HepG2 (cell line): ENCODE measurements at regions of chr1 and their contacts with region 1.

Region 1: DNA sequence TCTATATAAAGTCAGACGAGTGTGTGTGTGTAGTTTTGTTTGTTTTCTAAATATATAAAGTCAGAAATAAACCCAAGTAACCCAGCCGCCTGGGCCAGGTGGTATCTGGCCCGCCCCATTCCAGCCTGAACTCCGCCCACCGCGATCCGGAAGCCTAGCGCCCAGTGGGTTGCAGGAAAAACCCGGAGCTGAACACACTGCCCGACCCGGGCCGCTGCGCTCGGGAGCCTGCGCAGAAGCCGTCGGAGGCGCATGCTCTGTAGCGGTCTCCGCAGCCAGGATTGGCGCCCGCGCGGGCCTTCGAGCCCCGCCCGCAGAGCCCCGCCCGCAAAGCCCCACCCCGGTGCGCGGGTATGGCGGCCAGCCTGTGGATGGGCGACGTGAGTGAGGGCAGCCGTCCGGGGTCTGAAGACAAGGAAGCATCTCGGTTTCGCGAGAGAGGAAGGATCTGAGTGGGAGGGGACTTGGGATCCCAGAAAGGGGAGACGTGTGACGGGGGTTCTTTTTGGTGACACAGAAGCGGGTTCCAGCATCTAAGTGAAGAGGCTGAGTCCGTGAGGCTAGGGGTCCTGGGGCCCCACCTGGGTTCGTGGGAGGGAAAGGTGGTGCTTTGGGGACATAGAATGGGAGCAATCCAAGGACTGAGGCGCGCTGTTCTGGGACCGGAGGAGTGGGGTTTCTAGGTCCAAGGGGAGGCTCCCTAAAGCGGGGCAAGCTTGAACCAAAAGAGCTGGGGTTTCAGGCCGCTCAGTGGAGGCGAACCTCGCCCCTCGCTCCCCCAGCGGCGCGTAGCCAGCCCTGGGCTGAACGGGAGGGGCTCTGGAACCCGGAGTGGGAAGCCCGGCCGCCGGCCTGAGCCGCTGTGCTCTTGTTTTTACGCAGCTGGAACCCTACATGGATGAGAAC is at the start of gene TRNAU1AP:
- DNase-seq: peak; percentile 90
- ATAC-seq: peak; percentile 94
- H3K4me3 ChIP-seq: peak within 1 kb of the TSS; percentile 67 to 92 (median 84)
- H3K27ac ChIP-seq: peak within 1 kb of the TSS; percentile 58
- H3K4me1 ChIP-seq: peaks cover 26% of the 10 kb centered on the region
- H3K27me3 ChIP-seq: no peaks in the 10 kb centered on the region; a peak in 1 of 5 replicates
- CTCF ChIP-seq: no peak; the same call in 1 of the 2 replicates
- EP300 ChIP-seq: peak in 1 of 2 experiments; percentile 56; a peak in 2 of 4 replicates
- POLR2A ChIP-seq: peak; percentile 48 to 81
- RAD21 ChIP-seq: peak; percentile 23; the same call in 1 of the 2 replicates
- total RNA-seq, gene TRNAU1AP: 28.3 and 29.0 TPM in 2 replicates

Region 2: DNA sequence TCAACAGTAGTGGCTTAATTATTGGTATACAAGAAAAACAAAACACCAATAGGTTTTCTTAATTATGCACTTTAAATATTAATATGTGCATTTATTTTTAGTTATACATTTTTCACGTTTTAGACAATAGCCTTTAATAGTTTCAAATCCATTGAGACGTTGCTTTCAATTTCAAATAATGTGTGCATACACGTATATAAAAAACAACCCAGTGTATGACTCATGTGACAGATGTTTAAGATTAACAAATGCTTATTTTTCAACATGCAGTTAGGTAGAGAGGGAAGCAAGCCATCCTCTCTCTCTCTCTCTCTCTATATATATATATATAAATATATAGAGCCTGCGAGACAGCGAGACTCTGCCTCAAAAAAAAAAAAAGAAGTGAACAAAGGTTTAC is 488.9 kb before region 1 on chr1:
- CTCF ChIA-PET with region 1: no interaction called
- POLR2A ChIA-PET with region 1: no interaction called
- in situ Hi-C with region 1: no loop called
- intact Hi-C with region 1: no loop called
- DNase-seq: no peak
- ATAC-seq: no peak
- H3K4me3 ChIP-seq: no peak overlapping the region
- H3K27ac ChIP-seq: no peak overlapping the region
- H3K4me1 ChIP-seq: peaks cover 5% of the 10 kb centered on the region; the same call in 1 of the 2 replicates
- H3K27me3 ChIP-seq: no peaks in the 10 kb centered on the region
- CTCF ChIP-seq: no peak
- EP300 ChIP-seq: no peak
- POLR2A ChIP-seq: no peak
- RAD21 ChIP-seq: no peak

Region 3: GRCh38 chr1:28510665-28511440 is 42.2 kb before region 1 on chr1:
- CTCF ChIA-PET with region 1: no interaction called
- POLR2A ChIA-PET with region 1: interaction called, 7 read pairs
- in situ Hi-C with region 1: no loop called
- intact Hi-C with region 1: loop called (anchors 2 kb)
- DNase-seq: peak; percentile 55
- ATAC-seq: peak; percentile 2
- H3K4me3 ChIP-seq: peak overlapping the region in 1 of 3 experiments; percentile 97; a peak in 1 of 6 replicates
- H3K27ac ChIP-seq: peak overlapping the region; percentile 86
- H3K4me1 ChIP-seq: peaks cover 50% of the 10 kb centered on the region
- H3K27me3 ChIP-seq: no peaks in the 10 kb centered on the region; a peak in 1 of 5 replicates
- CTCF ChIP-seq: no peak
- EP300 ChIP-seq: no peak
- POLR2A ChIP-seq: peak; percentile 64 to 95
- RAD21 ChIP-seq: peak; percentile 26

Region 4: DNA sequence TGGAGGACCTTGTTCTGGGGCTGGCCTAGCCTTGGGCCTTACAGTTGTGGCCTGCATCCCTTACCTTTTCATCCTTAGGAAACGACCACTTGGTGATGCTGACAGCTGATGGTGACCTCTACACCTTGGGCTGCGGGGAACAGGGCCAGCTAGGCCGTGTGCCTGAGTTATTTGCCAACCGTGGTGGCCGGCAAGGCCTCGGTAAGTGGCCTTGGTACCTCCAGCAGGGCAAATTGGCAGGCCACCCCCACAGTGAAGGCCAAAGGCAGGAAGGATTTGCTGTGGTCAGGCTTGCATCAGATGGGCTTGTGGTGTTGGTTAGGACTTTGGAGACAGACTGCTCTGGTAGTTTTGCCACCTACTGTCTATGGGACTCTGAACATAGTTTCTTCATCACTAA is 17.8 kb before region 1 on chr1:
- CTCF ChIA-PET with region 1: no interaction called
- POLR2A ChIA-PET with region 1: no interaction called
- in situ Hi-C with region 1: no loop called
- intact Hi-C with region 1: no loop called
- DNase-seq: no peak
- ATAC-seq: no peak
- H3K4me3 ChIP-seq: no peak overlapping the region
- H3K27ac ChIP-seq: no peak overlapping the region
- H3K4me1 ChIP-seq: no peaks in the 10 kb centered on the region
- H3K27me3 ChIP-seq: no peaks in the 10 kb centered on the region
- CTCF ChIP-seq: no peak
- EP300 ChIP-seq: no peak
- POLR2A ChIP-seq: no peak
- RAD21 ChIP-seq: no peak